GM10248 (cell line): ENCODE measurements at regions of chr3 and their contacts with region 1.

Region 1: GRCh38 chr3:25686766-25687165 is 22.1 kb upstream of the TOP2B start:
- DNase-seq: no peak
- CTCF ChIP-seq: no peak

Region 2: DNA sequence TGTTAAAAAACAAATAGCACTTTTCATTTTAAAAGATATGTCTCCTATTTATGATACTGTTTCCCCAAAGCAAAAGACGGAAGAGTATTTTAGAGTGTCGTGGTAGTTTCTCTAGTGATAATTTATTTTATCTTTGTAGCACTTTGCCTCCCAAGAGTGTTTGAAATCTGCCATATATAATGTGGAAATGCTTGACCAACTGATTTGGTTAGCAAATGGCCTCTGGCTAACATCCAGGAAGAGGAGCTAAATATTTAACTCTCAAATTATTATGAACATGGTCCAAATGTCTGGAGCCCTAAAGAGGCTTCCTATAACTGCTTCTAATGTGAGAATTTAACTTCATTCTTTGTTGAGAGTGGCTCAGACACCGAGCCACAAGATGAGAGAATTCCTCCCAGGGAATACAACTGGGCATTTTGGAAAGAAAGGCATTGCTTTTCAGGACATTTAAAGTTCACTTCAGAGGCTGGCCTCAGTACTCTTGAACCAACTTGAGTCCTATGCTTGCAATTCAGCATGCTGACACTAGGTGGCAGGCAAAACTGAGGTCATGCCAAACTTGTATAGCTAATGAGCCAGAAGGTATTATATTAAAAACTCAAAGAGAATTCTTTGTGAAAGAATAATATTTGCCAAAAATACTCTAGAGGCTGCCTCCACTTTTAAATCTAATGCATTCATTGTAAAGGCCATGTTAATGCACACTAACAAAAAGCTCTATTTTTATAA is 154.2 kb before region 1 on chr3:
- CTCF ChIA-PET with region 1: no interaction called
- POLR2A ChIA-PET with region 1: no interaction called
- DNase-seq: peak; percentile 8
- CTCF ChIP-seq: peak; percentile 34

Region 3: GRCh38 chr3:25706213-25706612 is 19.4 kb after region 1 on chr3:
- CTCF ChIA-PET with region 1: interaction called, 11 read pairs
- POLR2A ChIA-PET with region 1: no interaction called
- DNase-seq: no peak
- CTCF ChIP-seq: no peak

Region 4: DNA sequence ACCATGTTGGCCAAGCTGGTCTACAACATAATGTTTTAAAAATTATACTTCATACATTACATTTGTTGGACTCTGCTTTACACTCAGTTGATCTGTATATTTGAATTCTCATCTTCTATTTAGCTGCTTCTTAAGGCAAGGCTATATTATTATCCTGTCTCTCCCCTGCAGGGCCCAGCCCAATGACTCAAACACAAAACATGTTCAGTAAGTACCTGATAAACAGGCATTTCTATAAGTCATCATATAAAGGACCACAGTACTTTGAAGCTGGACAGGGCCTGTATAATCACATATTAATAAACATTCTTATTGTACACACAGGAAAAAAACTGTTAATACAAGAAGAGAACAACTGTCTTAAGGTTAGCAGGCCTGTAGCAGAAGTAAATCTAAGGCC is 60.3 kb after region 1 on chr3:
- CTCF ChIA-PET with region 1: no interaction called
- POLR2A ChIA-PET with region 1: no interaction called
- DNase-seq: no peak
- CTCF ChIP-seq: no peak